Sigmoid colon (tissue), 7 donors: ENCODE measurements at regions of chr16 and their contacts with region 1.

Region 1: GRCh38 chr16:89241187-89242007 is 23.9 kb downstream of the ZNF778 start:
- DNase-seq: peak; percentile 89
- H3K4me3 ChIP-seq: peak overlapping the region; percentile 60 to 71 (median 64)
- H3K27ac ChIP-seq: peak overlapping the region; percentile 86 to 96 (median 94)
- H3K4me1 ChIP-seq: peaks cover 0 to 11% (median 6%) of the 10 kb centered on the region in 4 donors
- H3K27me3 ChIP-seq: no peaks in the 10 kb centered on the region
- CTCF ChIP-seq: no peak
- EP300 ChIP-seq: no peak
- POLR2A ChIP-seq: peak; percentile 78 to 80

Region 2: DNA sequence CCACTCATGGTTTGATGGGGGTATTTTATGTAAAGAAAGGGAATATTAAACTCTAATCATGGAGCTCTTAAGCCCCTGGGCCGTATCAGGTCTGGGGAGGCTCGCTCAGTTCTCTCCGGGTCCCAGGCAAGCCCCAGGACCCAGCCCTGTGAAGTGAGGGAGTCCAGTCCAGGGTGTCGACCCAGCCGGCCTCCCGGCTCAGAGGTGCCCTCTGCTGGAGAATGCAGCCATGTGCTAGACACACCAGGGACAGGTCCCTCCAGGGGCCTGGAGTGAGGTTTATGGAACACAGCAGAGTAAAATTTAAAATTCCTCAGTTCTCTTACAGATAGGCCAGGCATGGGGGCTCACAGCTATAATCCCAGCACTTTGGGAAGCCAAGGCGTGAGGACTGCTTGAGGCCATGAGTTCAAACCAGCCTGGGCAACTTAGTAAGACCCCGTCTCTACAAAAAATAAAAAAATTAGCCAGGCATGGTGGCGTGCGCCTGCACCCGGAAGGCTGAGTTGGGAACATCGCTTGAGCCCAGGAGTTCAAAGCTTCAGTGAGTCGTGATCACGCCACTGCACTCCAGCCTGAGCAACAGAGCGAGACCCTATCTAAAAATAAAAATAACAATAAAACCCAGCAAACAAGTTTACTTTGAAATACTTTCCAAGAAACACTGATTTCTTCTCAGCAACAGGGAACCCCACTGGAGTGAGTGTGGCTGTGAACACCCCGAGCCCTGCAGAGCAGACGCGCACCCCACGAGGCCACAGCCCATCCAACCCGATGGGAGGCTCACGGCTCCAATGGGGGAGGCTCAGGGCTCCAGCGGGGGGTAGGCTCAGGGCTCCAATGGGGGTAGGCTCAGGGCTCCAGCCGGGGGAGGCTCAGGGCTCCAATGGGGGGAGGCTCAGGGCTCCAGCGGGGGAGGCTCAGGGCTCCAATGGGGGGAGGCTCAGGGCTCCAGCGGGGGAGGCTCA is 48.3 kb after region 1 on chr16:
- intact Hi-C with region 1: loop called (anchors 2 kb)
- DNase-seq: peak; percentile 84
- H3K4me3 ChIP-seq: no peak overlapping the region
- H3K27ac ChIP-seq: peak overlapping the region in 2 of 4 donors; percentile 2 to 22
- H3K4me1 ChIP-seq: peaks cover 0 to 22% (median 15%) of the 10 kb centered on the region in 4 donors
- H3K27me3 ChIP-seq: no peaks in the 10 kb centered on the region
- CTCF ChIP-seq: peak; percentile 64 to 85 (median 68)
- EP300 ChIP-seq: no peak
- POLR2A ChIP-seq: no peak

Region 3: GRCh38 chr16:89720813-89721545 is 479.6 kb after region 1 on chr16 and contains the starts of genes VPS9D1 and ZNF276:
- intact Hi-C with region 1: loop called (anchors 5 kb)
- DNase-seq: peak; percentile 88
- H3K4me3 ChIP-seq: peak within 1 kb of the TSS; percentile 74 to 98 (median 77)
- H3K27ac ChIP-seq: peak within 1 kb of the TSS; percentile 96 to 99 (median 98)
- H3K4me1 ChIP-seq: peaks cover 0 to 36% (median 31%) of the 10 kb centered on the region in 4 donors
- H3K27me3 ChIP-seq: no peaks in the 10 kb centered on the region
- CTCF ChIP-seq: no peak
- EP300 ChIP-seq: no peak
- POLR2A ChIP-seq: peak; percentile 37 to 39
- total RNA-seq, gene VPS9D1: 3.8 to 10.5 (median 4.0) TPM
- total RNA-seq, gene ZNF276: 13.7 to 26.9 (median 18.2) TPM